ENCODE measurements at regions of chr2 and their contacts with region 1.

Region 1: DNA sequence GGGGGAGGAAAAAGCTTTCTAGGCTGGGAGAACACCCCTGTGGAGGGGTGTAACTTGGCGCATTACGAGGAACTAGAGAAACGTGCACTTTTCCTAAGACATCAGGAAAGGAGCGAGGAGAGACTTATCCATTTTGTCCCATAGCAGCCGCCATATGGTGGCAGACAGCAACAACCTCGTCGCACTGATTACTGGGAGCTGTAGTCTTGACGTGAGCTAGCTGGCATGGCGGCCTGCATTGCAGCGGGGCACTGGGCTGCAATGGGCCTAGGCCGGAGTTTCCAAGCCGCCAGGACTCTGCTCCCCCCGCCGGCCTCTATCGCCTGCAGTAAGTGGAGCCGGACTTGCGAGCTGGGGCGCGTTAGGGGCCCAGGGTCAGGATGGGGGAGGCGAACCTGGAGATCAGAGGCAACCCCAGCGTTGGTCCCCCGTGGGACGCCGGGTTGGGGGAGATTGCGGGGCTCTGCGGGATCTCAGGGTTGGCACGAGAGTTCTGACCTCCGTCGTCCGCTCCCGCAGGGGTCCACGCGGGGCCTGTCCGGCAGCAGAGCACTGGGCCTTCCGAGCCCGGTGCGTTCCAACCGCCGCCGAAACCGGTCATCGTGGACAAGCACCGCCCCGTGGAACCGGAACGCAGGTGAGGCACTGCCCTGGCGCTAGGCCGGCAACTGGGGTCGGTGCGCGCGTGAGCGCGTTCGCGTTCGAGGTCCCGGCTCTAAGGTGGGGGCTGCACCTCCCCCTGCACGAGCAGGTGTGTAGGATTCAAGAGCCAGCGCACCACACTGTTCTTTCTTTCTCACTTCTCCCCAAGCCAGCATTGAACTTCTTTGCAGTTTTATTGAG is at the start of gene MRPL19:
- DNase-seq: peak; percentile 70
- ATAC-seq: peak; percentile 97
- H3K4me3 ChIP-seq: peak within 1 kb of the TSS; percentile 92
- H3K27ac ChIP-seq: peak within 1 kb of the TSS; percentile 83
- H3K4me1 ChIP-seq: no peaks in the 10 kb centered on the region
- H3K27me3 ChIP-seq: no peaks in the 10 kb centered on the region
- CTCF ChIP-seq: no peak
- EP300 ChIP-seq: no peak
- POLR2A ChIP-seq: peak; percentile 86
- RAD21 ChIP-seq: no peak
- polyA plus RNA-seq, gene MRPL19: 13.1 to 17.9 TPM

Region 2: DNA sequence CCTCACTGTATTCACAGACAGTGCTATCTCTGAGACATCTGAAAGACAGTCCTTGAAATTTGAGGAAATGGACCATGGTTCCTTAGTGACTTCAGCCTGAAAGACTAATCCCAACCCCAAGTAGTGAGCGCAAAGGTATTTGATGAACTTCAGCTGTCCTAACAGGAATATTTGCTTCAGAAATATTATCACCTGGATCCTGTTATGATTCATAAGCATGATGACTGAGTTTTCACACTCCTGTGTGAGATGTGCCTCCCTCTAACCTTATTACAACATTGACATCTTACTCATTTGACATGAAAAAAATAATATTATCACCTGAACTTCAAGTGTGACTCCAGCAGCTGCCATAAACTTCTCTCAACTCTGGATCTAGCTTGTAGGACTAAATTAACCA is 11.9 kb before region 1 on chr2:
- CTCF ChIA-PET with region 1: interaction called, 32 read pairs
- POLR2A ChIA-PET with region 1: no interaction called
- RAD21 ChIA-PET with region 1: interaction called, 3 read pairs
- SMC1A ChIA-PET with region 1: interaction called, 4 read pairs
- in situ Hi-C with region 1: no loop called
- intact Hi-C with region 1: no loop called
- DNase-seq: no peak
- ATAC-seq: no peak
- H3K4me3 ChIP-seq: no peak overlapping the region
- H3K27ac ChIP-seq: no peak overlapping the region
- H3K4me1 ChIP-seq: no peaks in the 10 kb centered on the region
- H3K27me3 ChIP-seq: peaks cover 0 to 2% of the 10 kb centered on the region in 2 experiments; a peak in 1 of 4 replicates
- CTCF ChIP-seq: no peak
- EP300 ChIP-seq: no peak
- POLR2A ChIP-seq: no peak
- RAD21 ChIP-seq: no peak

Region 3: GRCh38 chr2:75667884-75668283 is 21.1 kb after region 1 on chr2:
- CTCF ChIA-PET with region 1: interaction called, 29 read pairs
- POLR2A ChIA-PET with region 1: interaction called, 5 read pairs
- RAD21 ChIA-PET with region 1: interaction called, 5 read pairs
- SMC1A ChIA-PET with region 1: interaction called, 12 read pairs
- in situ Hi-C with region 1: no loop called
- intact Hi-C with region 1: no loop called
- DNase-seq: no peak
- ATAC-seq: no peak
- H3K4me3 ChIP-seq: no peak overlapping the region
- H3K27ac ChIP-seq: no peak overlapping the region
- H3K4me1 ChIP-seq: no peaks in the 10 kb centered on the region
- H3K27me3 ChIP-seq: no peaks in the 10 kb centered on the region
- CTCF ChIP-seq: no peak
- EP300 ChIP-seq: no peak
- POLR2A ChIP-seq: no peak
- RAD21 ChIP-seq: no peak

Region 4: GRCh38 chr2:75676464-75676863 is 29.7 kb after region 1 on chr2:
- CTCF ChIA-PET with region 1: interaction called, 150 read pairs
- POLR2A ChIA-PET with region 1: interaction called, 4 read pairs
- RAD21 ChIA-PET with region 1: interaction called, 34 read pairs
- SMC1A ChIA-PET with region 1: interaction called, 41 read pairs
- in situ Hi-C with region 1: no loop called
- intact Hi-C with region 1: no loop called
- DNase-seq: no peak
- ATAC-seq: no peak
- H3K4me3 ChIP-seq: no peak overlapping the region
- H3K27ac ChIP-seq: no peak overlapping the region
- H3K4me1 ChIP-seq: peaks cover 7% of the 10 kb centered on the region
- H3K27me3 ChIP-seq: no peaks in the 10 kb centered on the region
- CTCF ChIP-seq: no peak
- EP300 ChIP-seq: no peak
- POLR2A ChIP-seq: no peak
- RAD21 ChIP-seq: no peak

Region 5: DNA sequence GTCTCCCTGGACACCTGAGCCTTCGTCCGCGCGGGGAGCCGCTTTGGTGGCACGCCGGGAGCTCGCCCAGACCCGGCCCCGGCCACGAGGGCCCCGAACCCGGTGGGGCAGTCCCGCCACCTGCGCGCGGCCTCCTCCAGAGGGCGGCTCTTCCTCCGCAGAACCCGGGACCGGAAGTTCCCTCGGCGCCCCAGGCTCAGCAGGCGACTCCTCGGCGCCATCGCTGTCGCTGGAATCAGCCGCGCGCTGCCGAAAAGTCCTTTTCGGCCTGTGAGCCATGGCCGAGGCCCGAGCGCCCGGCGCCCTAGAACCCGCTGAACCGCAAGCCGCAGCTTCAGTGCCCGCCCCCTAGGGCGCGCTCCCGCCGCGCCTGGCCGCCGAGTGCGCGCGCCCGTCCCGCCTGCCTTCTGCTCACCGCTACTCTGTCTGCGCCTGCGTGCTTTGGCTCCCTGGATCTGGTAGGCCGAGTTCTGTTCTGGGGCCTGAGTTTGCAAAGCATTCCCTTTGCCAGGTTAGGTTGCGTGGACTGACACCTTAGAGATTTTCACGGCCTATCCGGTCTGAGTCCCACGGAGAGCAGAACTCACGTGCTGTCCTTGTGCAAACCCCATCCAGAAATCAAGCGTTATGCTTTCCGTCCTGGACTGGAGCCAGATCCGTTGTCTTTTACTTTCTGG is 63.9 kb after region 1 on chr2 and contains the start of gene GCFC2:
- CTCF ChIA-PET with region 1: interaction called, 20 read pairs
- POLR2A ChIA-PET with region 1: interaction called, 5 read pairs
- RAD21 ChIA-PET with region 1: interaction called, 3 read pairs
- SMC1A ChIA-PET with region 1: interaction called, 5 read pairs
- in situ Hi-C with region 1: no loop called
- intact Hi-C with region 1: loop called (anchors 2 kb)
- DNase-seq: peak; percentile 58
- ATAC-seq: peak; percentile 94
- H3K4me3 ChIP-seq: peak within 1 kb of the TSS; percentile 86
- H3K27ac ChIP-seq: peak within 1 kb of the TSS; percentile 94
- H3K4me1 ChIP-seq: peaks cover 14% of the 10 kb centered on the region
- H3K27me3 ChIP-seq: no peaks in the 10 kb centered on the region
- CTCF ChIP-seq: peak; percentile 42 to 59 (median 47); a peak in 5 of 6 replicates
- EP300 ChIP-seq: no peak
- POLR2A ChIP-seq: peak; percentile 96
- RAD21 ChIP-seq: no peak
- polyA plus RNA-seq, gene GCFC2: 15.5 to 27.4 TPM

Region 6: DNA sequence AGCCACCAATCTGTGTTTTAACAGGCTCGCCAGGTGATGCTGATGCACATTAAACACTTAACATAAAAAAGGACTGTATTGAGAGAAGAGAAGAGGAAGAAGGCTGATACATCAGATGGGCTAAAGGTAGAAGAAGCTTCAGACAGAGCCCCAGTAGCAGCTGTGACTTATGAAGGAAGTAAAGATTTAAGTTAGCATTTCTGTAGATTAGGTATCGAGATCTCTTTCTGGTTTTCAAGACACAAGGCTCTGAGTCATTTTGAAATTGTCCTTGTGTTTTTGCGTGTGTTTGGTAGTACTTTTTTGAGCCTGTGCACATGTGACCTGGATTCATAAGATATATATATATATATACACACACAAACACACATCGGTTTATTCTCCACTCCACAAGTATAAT is 104.6 kb after region 1 on chr2:
- CTCF ChIA-PET with region 1: no interaction called
- POLR2A ChIA-PET with region 1: no interaction called
- RAD21 ChIA-PET with region 1: no interaction called
- SMC1A ChIA-PET with region 1: no interaction called
- in situ Hi-C with region 1: no loop called
- intact Hi-C with region 1: no loop called
- DNase-seq: peak; percentile 16
- ATAC-seq: peak; percentile 40; the same call in 2 of the 3 replicates
- H3K4me3 ChIP-seq: no peak overlapping the region
- H3K27ac ChIP-seq: no peak overlapping the region
- H3K4me1 ChIP-seq: peaks cover 11% of the 10 kb centered on the region
- H3K27me3 ChIP-seq: no peaks in the 10 kb centered on the region
- CTCF ChIP-seq: no peak
- EP300 ChIP-seq: no peak
- POLR2A ChIP-seq: no peak
- RAD21 ChIP-seq: no peak

Region 7: DNA sequence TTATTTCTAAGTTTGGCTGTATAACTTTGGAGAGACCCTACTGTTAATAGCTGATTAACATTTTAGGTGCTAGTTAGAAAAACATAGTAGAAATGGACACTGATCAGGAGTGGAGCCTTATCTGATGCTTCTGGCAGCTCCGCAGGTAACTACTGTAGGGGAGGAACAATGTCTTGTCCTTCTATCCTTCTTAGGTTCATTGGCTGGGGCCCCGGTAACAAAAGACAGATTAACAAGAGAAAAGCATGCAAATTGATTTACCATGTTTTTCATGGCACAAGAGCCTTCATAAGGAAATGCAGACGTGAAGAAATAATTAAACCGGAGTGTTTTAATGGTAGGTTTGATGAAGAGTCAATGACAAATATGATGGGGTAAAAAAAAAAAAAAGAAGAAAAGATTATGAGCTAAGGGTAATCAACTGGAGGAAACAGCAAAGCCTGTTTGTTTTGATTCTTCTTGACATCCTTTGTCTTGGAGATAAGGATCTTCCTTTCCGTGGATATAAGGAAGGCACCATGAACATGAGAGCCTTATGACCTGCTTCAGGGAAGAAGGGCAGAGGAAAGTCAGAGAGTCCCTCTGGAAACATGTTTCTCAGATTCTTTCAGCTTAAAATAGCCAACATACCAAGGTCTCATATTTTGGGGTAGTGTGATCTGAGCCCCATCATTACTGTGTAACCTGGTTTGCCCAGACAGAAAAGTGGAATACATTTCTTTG is 126.3 kb after region 1 on chr2:
- CTCF ChIA-PET with region 1: no interaction called
- POLR2A ChIA-PET with region 1: no interaction called
- RAD21 ChIA-PET with region 1: no interaction called
- SMC1A ChIA-PET with region 1: no interaction called
- in situ Hi-C with region 1: no loop called
- intact Hi-C with region 1: no loop called
- DNase-seq: no peak
- ATAC-seq: no peak
- H3K4me3 ChIP-seq: no peak overlapping the region
- H3K27ac ChIP-seq: no peak overlapping the region
- H3K4me1 ChIP-seq: no peaks in the 10 kb centered on the region
- H3K27me3 ChIP-seq: no peaks in the 10 kb centered on the region
- CTCF ChIP-seq: no peak
- EP300 ChIP-seq: no peak
- POLR2A ChIP-seq: no peak
- RAD21 ChIP-seq: no peak

Region 8: GRCh38 chr2:76157531-76157930 is 510.7 kb after region 1 on chr2:
- CTCF ChIA-PET with region 1: no interaction called
- POLR2A ChIA-PET with region 1: no interaction called
- RAD21 ChIA-PET with region 1: no interaction called
- SMC1A ChIA-PET with region 1: no interaction called
- in situ Hi-C with region 1: no loop called
- intact Hi-C with region 1: no loop called
- DNase-seq: no peak
- ATAC-seq: no peak
- H3K4me3 ChIP-seq: no peak overlapping the region
- H3K27ac ChIP-seq: no peak overlapping the region
- H3K4me1 ChIP-seq: no peaks in the 10 kb centered on the region
- H3K27me3 ChIP-seq: no peaks in the 10 kb centered on the region
- CTCF ChIP-seq: no peak
- EP300 ChIP-seq: no peak
- POLR2A ChIP-seq: no peak
- RAD21 ChIP-seq: no peak

Measured in GM12878 (cell line).